HCT116 (cell line): ENCODE measurements at regions of chr1 and their contacts with region 1.

Region 1: DNA sequence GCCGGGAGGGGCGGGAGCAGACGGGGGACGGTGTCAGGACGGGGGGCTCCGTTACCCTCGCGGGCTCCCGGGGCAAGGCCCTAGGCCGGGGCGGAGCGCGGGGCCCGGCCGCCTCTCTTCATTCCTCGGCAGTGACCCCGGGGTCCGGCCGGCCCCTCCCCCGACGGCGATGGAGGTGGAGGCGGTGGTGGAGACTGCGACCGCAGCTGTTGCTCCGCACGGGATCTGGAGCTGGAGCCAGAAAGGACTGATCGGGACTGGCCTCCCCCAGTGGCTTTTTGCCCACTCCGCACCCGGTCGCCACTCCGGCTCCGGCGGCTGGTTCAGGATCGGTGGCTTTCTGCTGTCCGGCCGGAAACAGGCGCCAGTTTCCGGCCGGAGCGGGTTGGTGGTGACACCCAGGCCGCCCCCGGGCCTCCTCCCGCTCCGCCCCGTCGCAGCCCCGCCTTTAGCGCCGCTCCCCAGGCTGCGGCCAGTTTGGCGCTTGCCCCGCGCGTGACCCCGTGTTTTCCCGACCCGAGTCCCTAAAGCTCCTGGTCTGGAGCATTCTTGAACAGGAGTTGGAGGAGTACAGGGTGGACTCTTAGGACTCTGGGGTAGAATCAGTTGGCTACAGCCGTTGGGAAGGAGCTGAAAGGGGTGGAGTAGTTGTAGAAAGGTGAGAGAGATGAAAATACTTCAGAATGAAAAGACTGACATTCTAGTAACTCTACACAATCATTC is at the start of gene OTUD7B:
- DNase-seq: peak; percentile 68
- ATAC-seq: peak; percentile 88
- H3K4me3 ChIP-seq: peak within 1 kb of the TSS; percentile 83 to 94
- H3K27ac ChIP-seq: peak within 1 kb of the TSS; percentile 85
- H3K4me1 ChIP-seq: peaks cover 7 to 38% of the 10 kb centered on the region in 2 experiments; a peak in 3 of 4 replicates
- H3K27me3 ChIP-seq: no peaks in the 10 kb centered on the region
- CTCF ChIP-seq: no peak
- POLR2A ChIP-seq: no peak
- RAD21 ChIP-seq: peak; percentile 19
- total RNA-seq, gene OTUD7B: 23.7 TPM

Region 2: DNA sequence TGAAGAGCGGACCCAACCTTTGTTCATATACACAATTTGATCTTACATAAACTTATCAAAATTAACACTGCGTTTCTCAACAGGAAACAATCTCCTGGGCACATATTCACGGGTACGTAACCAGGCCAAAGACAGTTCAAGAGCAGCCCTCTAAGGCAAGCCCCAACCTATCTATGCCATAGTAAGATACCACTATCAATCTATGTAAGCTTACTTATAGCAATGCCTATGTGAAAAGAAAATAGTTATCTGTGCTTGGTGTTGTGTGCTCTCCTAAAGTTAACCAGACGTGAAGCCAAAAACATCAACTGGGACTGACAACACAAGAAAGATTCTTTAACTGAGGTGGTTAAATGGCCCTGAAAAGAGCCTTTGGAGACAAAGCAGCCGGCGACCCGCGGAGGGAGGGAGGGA is 160.6 kb before region 1 on chr1:
- CTCF ChIA-PET with region 1: no interaction called
- POLR2A ChIA-PET with region 1: no interaction called
- RAD21 ChIA-PET with region 1: no interaction called
- intact Hi-C with region 1: no loop called
- DNase-seq: no peak
- ATAC-seq: no peak
- H3K4me3 ChIP-seq: peak overlapping the region; percentile 65
- H3K27ac ChIP-seq: peak overlapping the region; percentile 86
- H3K4me1 ChIP-seq: peaks cover 30 to 41% of the 10 kb centered on the region in 2 experiments
- H3K27me3 ChIP-seq: no peaks in the 10 kb centered on the region
- CTCF ChIP-seq: no peak
- POLR2A ChIP-seq: peak; percentile 36
- RAD21 ChIP-seq: no peak

Region 3: DNA sequence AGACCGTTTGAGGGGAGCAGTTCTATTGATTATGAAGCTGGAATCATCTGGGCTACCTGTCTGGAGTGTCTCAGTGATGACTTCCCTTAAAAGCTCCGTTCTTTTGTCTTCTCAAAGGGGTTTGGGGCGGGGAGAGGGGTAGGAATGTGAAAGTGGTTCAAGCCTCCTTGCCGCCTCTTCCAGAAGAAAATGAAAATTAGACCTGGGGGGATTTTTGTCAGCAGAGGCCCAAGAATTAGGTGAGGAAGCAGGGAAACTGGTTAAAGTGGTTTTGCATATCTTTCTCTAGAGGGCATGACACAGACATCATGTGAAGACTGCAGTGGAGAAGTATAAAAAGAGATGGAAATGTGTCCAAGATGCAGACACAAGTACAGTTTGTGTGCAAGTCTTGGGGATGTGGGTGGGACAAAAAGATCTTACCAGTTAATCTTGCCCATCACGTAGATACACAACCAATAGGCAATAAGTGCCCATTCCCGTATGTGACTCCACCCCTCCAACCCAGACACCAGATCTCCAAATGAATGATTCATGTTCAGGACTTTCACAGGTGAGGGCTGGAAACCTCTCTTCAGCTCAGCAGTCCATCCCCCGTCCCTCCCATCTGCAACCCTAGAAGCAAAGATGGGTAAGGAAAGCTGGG is 73.4 kb before region 1 on chr1:
- CTCF ChIA-PET with region 1: no interaction called
- POLR2A ChIA-PET with region 1: interaction called, 4 read pairs
- RAD21 ChIA-PET with region 1: no interaction called
- intact Hi-C with region 1: loop called (anchors 5 kb)
- DNase-seq: peak; percentile 91
- ATAC-seq: peak; percentile 74
- H3K4me3 ChIP-seq: peak overlapping the region; percentile 64 to 66
- H3K27ac ChIP-seq: peak overlapping the region; percentile 89
- H3K4me1 ChIP-seq: peaks cover 39 to 63% of the 10 kb centered on the region in 2 experiments
- H3K27me3 ChIP-seq: no peaks in the 10 kb centered on the region
- CTCF ChIP-seq: no peak
- POLR2A ChIP-seq: peak; percentile 83
- RAD21 ChIP-seq: peak; percentile 18; the same call in 1 of the 2 replicates

Region 4: DNA sequence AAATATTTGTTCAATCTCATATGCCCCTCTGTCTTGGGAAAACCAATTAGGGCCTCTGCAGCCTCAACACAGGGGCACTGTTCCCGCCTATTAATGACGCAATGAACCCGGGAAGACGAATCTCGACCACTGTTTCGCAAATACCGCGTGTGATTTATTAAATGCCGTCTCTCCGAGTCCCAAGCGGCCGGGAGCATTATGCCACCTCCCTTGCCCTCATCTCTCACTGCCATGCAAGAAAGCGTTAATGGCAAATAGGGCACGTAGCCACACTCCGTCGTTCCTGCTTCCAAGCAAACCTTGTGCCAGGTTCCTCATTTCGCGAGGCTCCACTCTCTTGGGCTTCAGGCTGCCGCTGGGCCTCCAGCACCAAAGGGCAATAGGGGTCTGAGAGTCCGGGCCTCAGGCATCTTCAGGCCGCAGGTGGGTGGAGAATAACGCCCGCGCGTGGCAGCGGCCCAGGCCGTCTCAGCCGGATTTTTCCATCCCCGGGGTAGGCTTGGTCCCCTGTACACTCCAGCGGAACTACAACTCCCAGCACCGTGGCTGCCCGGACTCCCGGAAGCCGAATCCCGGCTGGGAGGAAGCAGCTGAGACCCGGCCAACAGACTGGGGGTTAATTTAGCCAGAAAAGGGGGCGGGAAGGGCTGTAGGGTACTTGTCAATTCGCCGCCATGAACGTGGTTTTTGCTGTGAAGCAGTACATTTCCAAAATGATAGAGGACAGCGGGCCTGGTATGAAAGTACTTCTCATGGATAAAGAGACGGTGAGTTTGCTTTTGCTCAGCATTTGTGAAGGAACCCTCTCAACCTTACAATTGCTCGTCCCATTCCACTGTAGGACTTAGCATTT is 56.9 kb after region 1 on chr1 and contains the start of gene VPS45:
- CTCF ChIA-PET with region 1: no interaction called
- POLR2A ChIA-PET with region 1: interaction called, 4 read pairs
- RAD21 ChIA-PET with region 1: no interaction called
- intact Hi-C with region 1: loop called (anchors 2 kb)
- DNase-seq: peak; percentile 89
- ATAC-seq: peak; percentile 93
- H3K4me3 ChIP-seq: peak within 1 kb of the TSS; percentile 78 to 83
- H3K27ac ChIP-seq: peak within 1 kb of the TSS; percentile 94
- H3K4me1 ChIP-seq: peaks cover 15 to 32% of the 10 kb centered on the region in 2 experiments
- H3K27me3 ChIP-seq: no peaks in the 10 kb centered on the region
- CTCF ChIP-seq: no peak
- POLR2A ChIP-seq: no peak
- RAD21 ChIP-seq: no peak
- total RNA-seq, gene VPS45: 28.1 TPM

Region 5: DNA sequence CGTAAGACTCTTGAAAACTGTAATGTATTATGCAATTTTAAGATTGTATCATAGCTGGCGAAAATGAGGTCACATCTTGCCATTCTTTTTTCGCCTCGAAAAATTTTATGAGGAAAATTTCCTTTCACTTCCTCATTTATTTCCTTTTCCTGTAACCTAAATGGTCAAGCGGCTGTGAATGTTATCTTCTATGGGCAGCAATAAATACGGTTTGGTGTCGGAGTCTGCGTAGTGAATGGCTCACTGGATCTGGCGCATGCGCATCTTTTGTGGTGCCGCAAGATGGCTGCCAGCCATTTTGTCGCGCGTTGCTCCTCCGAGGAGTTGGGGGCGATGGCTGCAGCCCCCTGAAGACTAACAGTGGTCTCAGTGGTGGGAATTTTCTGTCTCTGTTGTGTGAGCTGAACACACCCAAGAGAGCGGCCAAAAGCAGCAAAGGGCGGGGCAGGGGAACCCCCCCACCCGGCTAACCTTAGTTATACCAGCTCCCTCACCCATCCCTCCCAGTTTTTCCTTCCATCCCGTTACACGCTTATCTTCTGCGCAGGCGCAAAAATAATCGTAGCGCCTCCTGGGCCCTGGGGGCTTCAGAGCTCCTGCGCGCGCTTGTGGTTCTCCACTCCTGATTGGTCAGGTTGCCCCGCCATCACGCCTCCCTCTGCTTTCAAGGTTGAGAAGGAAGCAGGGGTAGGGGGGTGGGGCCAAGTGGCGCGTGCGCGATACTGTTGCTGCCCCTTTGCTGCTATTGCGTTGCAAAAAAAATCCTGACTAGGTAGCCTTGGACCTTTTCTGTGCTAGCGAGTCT is 353.1 kb after region 1 on chr1 and contains the start of gene RPRD2:
- CTCF ChIA-PET with region 1: no interaction called
- POLR2A ChIA-PET with region 1: no interaction called
- RAD21 ChIA-PET with region 1: no interaction called
- intact Hi-C with region 1: no loop called
- DNase-seq: peak; percentile 99
- ATAC-seq: peak; percentile 96
- H3K4me3 ChIP-seq: peak within 1 kb of the TSS; percentile 80 to 89
- H3K27ac ChIP-seq: peak within 1 kb of the TSS; percentile 99
- H3K4me1 ChIP-seq: peaks cover 17 to 23% of the 10 kb centered on the region in 2 experiments
- H3K27me3 ChIP-seq: no peaks in the 10 kb centered on the region
- CTCF ChIP-seq: no peak
- POLR2A ChIP-seq: peak; percentile 61
- RAD21 ChIP-seq: no peak
- total RNA-seq, gene RPRD2: 26.7 TPM